PC-9 (cell line): ENCODE measurements at regions of chr12 and their contacts with region 1.

Region 1: GRCh38 chr12:12724661-12725545 is 7.7 kb downstream of the CDKN1B start:
- DNase-seq: peak in 1 of 2 experiments; percentile 96
- H3K4me3 ChIP-seq: peak overlapping the region; percentile 96
- H3K27ac ChIP-seq: peak overlapping the region; percentile 98
- H3K4me1 ChIP-seq: peaks cover 31% of the 10 kb centered on the region
- H3K27me3 ChIP-seq: no peaks in the 10 kb centered on the region
- CTCF ChIP-seq: no peak

Region 2: DNA sequence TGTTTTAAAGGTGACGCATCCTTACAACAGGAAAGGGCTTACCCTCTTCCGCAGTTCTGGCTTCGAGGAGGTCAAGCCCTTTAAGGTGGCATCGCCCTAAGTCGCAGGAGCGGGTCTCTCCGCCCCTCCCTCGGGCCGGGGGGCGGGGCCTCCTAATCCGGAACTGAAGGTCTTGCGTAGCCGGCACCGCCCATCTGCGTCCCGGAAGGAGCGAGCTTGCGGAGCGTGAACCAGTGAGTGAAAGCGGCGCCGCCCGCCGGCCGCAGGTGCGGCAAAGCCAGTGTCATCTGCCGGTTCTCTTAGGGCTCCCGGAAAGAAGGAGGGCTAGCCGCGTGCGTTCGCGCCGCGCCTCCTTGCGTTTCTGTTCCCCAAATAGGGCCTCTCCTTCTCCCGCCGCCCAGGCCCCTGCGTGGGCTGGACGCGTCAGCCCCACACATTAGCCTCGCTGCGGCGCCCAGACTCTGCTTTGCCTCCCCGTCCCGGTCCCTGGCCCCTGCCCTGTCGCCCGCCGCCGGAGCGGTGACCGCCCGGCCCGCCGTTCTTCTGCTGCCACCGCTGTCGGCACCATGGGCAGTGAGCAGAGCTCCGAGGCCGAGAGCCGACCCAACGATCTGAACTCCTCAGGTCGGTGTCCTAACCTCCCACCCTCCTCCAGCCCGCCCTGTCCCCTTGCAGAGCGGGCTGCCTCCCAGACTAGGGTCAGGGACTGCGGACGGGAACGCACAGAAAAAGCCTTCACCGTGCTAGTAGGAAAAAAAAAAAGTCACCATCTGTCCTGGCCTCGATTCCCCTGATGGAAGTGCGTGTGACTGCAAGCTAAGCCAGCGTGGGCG is 367.8 kb before region 1 on chr12 and contains the start of gene BORCS5:
- CTCF ChIA-PET with region 1: no interaction called
- POLR2A ChIA-PET with region 1: interaction called, 16 read pairs
- intact Hi-C with region 1: no loop called
- DNase-seq: peak; percentile 94 to 99
- H3K4me3 ChIP-seq: peak within 1 kb of the TSS; percentile 70
- H3K27ac ChIP-seq: peak within 1 kb of the TSS; percentile 73
- H3K4me1 ChIP-seq: peaks cover 19% of the 10 kb centered on the region
- H3K27me3 ChIP-seq: no peaks in the 10 kb centered on the region
- CTCF ChIP-seq: no peak
- total RNA-seq, gene BORCS5: 18.2 and 19.7 TPM in 2 replicates

Region 3: DNA sequence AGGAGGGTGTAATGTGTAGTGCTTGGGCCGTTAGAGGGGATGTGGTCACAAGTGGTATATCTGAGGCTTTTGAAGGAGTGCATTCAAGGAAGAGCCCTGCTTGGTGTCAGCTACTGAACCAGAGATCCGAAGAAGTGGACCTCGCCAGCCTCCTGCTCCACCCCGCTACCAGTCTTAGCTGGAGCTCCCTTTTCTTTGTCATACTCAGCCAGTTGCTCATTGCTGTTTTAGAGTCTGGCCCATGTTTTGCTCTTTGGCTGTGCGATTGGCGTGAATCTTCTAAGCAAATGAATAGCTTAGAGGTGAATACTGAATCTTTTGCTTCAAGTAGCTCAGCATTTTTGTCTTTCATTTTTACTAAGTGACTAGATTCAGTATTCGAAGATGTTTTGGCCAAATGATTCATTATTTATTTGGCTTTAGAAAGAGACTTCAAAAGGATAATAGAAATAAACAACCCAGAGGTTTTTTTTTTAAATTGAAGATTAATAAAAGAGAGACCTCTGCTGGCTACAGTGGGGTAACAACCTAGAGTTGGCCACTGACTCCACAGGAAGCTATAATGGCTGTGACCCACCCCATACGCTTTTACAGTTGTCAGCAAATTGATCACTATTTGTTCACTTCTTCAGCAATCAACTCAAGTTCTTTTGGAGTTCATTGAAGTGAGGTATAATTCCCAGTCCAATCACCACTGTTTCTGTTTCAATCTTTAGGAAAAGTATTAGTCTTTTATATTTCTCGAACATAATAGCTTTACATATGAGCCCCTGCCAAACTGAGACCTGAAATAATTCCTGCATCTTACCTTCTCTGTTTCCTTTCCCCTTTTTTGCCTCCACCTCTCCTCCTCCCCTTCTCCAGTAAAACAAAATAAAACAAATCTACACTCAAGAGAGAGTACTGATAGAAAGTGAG is 12.1 kb after region 1 on chr12:
- CTCF ChIA-PET with region 1: interaction called, 17 read pairs
- POLR2A ChIA-PET with region 1: no interaction called
- intact Hi-C with region 1: no loop called
- DNase-seq: no peak
- H3K4me3 ChIP-seq: no peak overlapping the region
- H3K27ac ChIP-seq: no peak overlapping the region
- H3K4me1 ChIP-seq: peaks cover 16% of the 10 kb centered on the region; the same call in 1 of the 2 replicates
- H3K27me3 ChIP-seq: no peaks in the 10 kb centered on the region
- CTCF ChIP-seq: peak; percentile 70

Region 4: DNA sequence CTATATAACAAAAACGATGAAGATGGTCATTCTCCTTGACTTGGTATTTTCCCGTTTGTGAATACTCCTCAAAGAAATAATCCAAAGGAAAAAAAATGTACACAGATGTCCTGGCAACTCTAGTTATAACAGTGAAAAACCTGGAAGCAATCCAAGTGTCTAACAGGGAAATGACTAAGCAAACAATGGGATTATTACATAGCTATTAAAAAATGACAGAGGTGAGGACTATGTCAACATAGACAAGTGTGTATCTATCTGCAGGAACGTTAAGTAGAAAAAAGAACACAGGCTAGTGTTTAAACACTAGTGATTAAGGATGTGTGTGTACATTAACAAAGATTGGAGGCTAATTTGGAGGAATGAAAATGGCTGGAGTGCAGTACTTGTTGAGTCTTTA is 54.6 kb after region 1 on chr12:
- CTCF ChIA-PET with region 1: no interaction called
- POLR2A ChIA-PET with region 1: interaction called, 8 read pairs
- intact Hi-C with region 1: loop called (anchors 2 kb)
- DNase-seq: peak in 1 of 2 experiments; percentile 92
- H3K4me3 ChIP-seq: no peak overlapping the region
- H3K27ac ChIP-seq: peak overlapping the region; percentile 37
- H3K4me1 ChIP-seq: peaks cover 44% of the 10 kb centered on the region
- H3K27me3 ChIP-seq: no peaks in the 10 kb centered on the region
- CTCF ChIP-seq: no peak

Region 5: DNA sequence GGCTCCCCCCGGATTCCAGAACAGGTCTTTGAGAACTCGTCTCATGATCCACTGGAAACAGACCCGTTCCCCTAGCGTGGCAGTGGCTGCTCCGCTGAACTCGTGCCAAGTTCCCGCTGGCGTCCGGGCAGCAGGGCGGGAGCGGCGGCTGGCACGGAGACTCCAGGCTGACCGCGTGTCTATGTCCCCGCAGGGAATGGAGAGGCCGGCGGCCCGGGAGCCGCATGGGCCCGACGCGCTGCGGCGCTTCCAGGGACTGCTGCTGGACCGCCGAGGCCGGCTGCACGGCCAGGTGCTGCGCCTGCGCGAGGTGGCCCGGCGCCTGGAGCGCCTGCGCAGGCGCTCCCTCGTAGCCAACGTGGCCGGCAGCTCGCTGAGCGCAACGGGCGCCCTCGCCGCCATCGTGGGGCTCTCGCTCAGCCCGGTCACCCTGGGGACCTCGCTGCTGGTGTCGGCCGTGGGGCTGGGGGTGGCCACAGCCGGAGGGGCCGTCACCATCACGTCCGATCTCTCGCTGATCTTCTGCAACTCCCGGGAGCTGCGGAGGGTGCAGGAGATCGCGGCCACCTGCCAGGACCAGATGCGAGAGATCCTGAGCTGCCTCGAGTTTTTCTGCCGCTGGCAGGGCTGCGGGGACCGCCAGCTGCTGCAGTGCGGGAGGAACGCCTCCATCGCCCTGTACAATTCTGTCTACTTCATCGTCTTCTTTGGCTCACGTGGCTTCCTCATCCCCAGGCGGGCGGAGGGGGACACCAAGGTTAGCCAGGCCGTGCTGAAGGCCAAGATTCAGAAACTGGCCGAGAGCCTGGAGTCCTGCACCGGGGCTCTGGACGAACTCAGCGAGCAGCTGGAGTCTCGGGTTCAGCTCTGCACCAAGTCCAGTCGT is 62.1 kb after region 1 on chr12:
- CTCF ChIA-PET with region 1: no interaction called
- POLR2A ChIA-PET with region 1: interaction called, 8 read pairs
- intact Hi-C with region 1: loop called (anchors 2 kb)
- DNase-seq: peak; percentile 57 to 83
- H3K4me3 ChIP-seq: peak overlapping the region; percentile 61; the same call in 1 of the 2 replicates
- H3K27ac ChIP-seq: peak overlapping the region; percentile 76
- H3K4me1 ChIP-seq: peaks cover 44% of the 10 kb centered on the region
- H3K27me3 ChIP-seq: no peaks in the 10 kb centered on the region
- CTCF ChIP-seq: no peak

Region 6: GRCh38 chr12:13173012-13173932 is 448.4 kb after region 1 on chr12:
- CTCF ChIA-PET with region 1: no interaction called
- POLR2A ChIA-PET with region 1: no interaction called
- intact Hi-C with region 1: loop called (anchors 10 kb)
- DNase-seq: peak; percentile 93 to 97
- H3K4me3 ChIP-seq: peak overlapping the region; percentile 37; the same call in 1 of the 2 replicates
- H3K27ac ChIP-seq: peak overlapping the region; percentile 99
- H3K4me1 ChIP-seq: peaks cover 100% of the 10 kb centered on the region
- H3K27me3 ChIP-seq: no peaks in the 10 kb centered on the region
- CTCF ChIP-seq: no peak

Region 7: DNA sequence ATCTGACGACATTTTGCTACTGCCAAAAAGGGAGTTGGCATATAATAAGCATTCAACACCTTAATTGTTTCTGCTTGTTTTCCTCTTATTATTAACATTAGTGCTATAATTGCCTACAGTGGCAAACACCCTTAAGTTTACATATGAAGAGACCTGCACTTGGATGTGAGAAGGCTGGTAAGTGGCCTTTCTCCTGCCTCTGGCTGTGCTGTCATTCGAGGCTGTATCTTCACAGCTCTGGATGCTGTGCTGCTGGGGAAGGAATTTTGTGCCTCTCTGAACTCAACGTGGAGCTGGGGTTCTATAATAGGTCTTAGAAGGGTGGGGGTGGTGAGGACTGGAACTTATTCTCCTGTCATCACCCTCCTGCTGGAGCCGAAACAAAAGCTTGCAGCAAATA is 857.5 kb after region 1 on chr12:
- CTCF ChIA-PET with region 1: no interaction called
- POLR2A ChIA-PET with region 1: interaction called, 23 read pairs
- intact Hi-C with region 1: no loop called
- DNase-seq: no peak
- H3K4me3 ChIP-seq: no peak overlapping the region
- H3K27ac ChIP-seq: no peak overlapping the region
- H3K4me1 ChIP-seq: peaks cover 12% of the 10 kb centered on the region
- H3K27me3 ChIP-seq: no peaks in the 10 kb centered on the region
- CTCF ChIP-seq: no peak